Cardiac septum (tissue), 1 donor: ENCODE measurements at regions of chr11 and their contacts with region 1.

Region 1: DNA sequence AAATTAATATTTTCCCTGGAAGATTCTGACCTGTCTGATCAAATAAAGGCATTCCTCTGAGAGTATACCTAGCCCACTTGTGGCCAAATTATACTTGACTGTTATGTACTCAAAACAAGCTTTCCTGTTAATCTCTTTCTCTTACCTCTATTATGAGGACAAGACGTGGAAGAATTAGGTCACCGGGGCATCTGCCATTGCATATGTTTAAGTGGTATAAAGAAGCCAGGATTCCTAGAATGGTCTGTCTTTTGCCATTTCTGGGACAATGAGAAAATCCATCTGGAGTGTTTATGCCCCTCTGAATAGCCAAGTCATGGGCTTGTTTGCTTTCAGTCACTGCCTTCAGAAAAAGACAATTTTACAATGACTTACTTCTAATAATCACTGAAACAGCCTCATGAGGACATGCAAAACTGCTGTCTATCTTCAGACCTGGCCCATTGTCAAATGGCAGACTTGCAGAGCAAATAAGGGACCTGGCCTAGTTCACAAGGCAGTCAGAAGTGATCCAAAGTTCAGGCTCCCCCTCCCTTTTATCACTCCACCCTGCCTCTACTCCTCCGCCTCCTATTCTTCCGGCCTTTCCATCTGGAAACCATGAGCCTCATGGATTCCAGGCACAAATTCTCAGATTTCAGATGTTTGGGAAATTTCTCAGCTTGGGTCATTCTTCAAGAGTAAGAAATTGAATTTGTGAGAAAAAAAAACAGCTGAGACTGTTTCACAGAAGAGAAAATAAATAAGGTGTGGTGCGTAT is 128.1 kb upstream of the LDLRAD3 start:
- DNase-seq: no peak

Region 2: GRCh38 chr11:35662649-35663407 is 152.9 kb before region 1 on chr11 and contains the start of gene TRIM44:
- intact Hi-C with region 1: loop called (anchors 5 kb)
- DNase-seq: peak; percentile 91
- total RNA-seq, gene TRIM44: 57.8 TPM

Region 3: GRCh38 chr11:35859301-35859700 is 43.6 kb after region 1 on chr11:
- intact Hi-C with region 1: no loop called
- DNase-seq: no peak